Dorsolateral prefrontal cortex (tissue), 120 donors: ENCODE measurements at regions of chr9 and their contacts with region 1.

Region 1: DNA sequence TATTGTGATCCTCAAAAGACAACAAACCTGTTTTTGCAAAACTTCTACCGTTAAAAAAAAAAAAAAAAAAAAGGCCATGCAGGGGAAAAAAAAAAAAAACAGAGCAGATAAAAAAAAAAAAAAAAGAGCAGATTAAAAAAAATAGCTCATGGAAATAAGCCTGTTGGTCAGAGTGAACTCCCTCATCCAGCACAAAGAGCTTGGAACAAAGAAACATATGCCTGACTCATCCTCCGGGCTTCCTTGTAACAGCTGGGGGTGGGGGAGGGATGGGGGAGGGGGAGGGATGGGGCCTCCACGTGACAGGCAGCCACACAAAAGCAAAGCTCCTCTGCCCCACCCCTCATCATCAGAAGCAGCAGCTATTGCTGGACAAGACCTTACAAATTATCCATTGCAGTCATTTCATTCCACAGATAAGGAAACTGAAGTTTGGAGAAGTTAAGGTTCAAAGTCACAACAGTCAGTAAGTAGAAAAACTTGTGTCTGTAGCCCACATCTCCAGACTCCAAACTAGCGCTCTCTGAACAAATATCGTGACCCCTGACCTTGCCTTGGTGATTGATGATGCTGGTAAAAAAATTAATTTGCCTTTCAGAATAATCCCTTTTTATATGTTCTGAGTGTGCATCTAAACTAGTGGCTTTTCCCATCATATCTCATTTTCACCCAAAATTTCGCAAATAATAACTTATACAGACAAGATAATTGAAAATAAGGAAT is 38.9 kb downstream of the SLC35D2 start:
- DNase-seq: peak in 7 of 10 donors; percentile 41 to 68 (median 59)
- H3K4me3 ChIP-seq: peak overlapping the region in 2 of 59 donors; percentile 4 to 6
- H3K27ac ChIP-seq: peak overlapping the region in 58 of 59 donors; percentile 30 to 97 (median 85)
- H3K27me3 ChIP-seq: no peaks in the 10 kb centered on the region
- CTCF ChIP-seq: peak in 2 of 56 donors; percentile 5 to 11

Region 2: DNA sequence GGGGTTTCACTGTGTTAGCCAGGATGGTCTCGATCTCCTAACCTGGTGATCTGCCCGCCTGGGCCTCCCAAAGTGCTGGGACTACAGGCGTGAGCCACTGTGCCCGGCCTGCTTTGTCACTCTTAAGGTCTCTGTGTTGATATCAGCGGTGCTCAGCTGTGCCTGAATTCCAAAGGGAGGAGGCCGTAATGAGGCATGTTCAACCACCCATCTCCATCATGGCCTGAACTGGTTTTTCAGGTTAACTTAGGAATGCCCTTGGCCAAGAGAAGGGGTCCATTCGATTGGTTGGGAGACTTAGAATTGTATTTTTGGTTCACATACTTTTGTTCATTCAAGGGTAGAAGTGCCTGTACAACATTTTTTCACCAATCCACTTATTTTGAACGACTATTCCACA is 64.7 kb before region 1 on chr9:
- intact Hi-C with region 1: no loop called
- DNase-seq: no peak
- H3K4me3 ChIP-seq: no peak overlapping the region
- H3K27ac ChIP-seq: no peak overlapping the region
- H3K27me3 ChIP-seq: no peaks in the 10 kb centered on the region
- CTCF ChIP-seq: no peak

Region 3: DNA sequence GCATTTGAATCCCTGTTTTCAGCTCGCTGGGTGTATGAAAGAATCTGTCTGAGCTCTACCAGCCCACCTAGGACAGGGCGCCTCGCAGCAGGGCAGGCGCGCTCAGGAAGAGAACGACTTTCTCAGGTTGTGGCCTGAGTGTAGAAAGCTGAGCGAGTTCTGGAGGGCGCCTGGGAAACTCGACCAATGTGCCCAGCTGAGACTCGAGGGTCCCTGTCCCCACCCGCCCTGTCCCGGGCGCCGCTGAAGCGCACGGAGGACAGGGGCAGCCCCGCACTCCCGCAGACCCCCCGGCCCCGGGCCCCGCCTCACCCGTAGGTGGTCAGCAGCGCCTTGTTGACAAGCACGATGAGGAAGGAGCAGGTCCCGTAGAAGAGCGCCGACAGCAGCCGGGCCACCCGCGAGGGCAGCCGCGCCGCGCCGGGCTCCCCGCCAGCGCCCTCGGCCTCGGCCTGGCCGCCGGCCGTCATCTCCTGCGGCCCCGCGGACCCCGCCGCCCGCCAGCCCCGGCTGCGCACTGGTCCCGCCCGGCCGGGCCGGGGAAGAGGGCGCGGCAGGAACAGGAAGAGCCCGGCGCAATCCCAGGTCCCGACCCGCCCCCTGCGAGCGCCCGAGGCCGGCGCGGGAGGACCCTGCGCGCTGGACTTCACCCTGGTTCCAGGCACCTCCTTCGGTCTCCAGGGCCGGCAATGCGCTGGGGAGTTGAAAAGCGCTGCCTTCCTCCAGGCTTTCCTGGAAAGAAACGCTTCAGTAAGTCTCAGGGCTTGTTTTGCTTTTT is 38.7 kb after region 1 on chr9 and contains the start of gene SLC35D2:
- intact Hi-C with region 1: loop called in 1 of 2 experiments (anchors 5 kb)
- DNase-seq: peak in 6 of 10 donors; percentile 22 to 72 (median 39)
- H3K4me3 ChIP-seq: peak within 1 kb of the TSS; percentile 49 to 84 (median 72)
- H3K27ac ChIP-seq: peak within 1 kb of the TSS; percentile 49 to 95 (median 88)
- H3K27me3 ChIP-seq: no peaks in the 10 kb centered on the region
- CTCF ChIP-seq: peak in 3 of 56 donors; percentile 9 to 17 (median 13)
- total RNA-seq, gene SLC35D2: 5.6 to 99.0 (median 18.4) TPM

Region 4: GRCh38 chr9:96449845-96450612 is 105.4 kb after region 1 on chr9 and contains the start of gene HABP4:
- intact Hi-C with region 1: no loop called
- DNase-seq: peak; percentile 92 to 99 (median 96)
- H3K4me3 ChIP-seq: peak within 1 kb of the TSS; percentile 52 to 94 (median 84)
- H3K27ac ChIP-seq: peak within 1 kb of the TSS in 58 of 59 donors; percentile 40 to 95 (median 86)
- H3K27me3 ChIP-seq: no peaks in the 10 kb centered on the region
- CTCF ChIP-seq: peak in 39 of 56 donors; percentile 6 to 77 (median 34)
- total RNA-seq, gene HABP4: 55.7 to 140 (median 94.3) TPM

Region 5: DNA sequence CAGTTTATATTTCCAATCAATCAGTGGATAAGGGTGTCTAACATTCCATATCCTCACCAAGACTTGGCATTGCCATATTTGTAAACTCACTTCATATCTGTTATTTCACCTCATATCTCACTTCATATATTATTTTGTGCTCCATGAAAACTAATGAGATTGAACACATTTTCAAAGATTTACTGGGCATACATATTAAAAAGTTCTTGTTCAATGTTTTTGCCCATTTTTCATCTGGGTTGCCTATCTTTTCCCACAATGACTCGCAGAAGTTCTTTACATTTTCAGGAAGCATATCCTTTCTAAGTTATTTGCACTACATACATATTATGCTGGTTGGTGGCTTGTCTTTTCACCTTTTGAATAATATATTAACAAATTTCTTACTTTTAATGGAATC is 417.9 kb after region 1 on chr9:
- intact Hi-C with region 1: no loop called
- DNase-seq: no peak
- H3K4me3 ChIP-seq: no peak overlapping the region
- H3K27ac ChIP-seq: no peak overlapping the region
- H3K27me3 ChIP-seq: no peaks in the 10 kb centered on the region
- CTCF ChIP-seq: no peak